ENCODE measurements at regions of chr17 and their contacts with region 1.

Region 1: GRCh38 chr17:79839363-79840268 is at the start of gene CBX4:
- DNase-seq: peak; percentile 95
- H3K4me3 Mint-ChIP-seq: peak within 1 kb of the TSS; percentile 90
- H3K27ac Mint-ChIP-seq: peak within 1 kb of the TSS; percentile 93
- H3K4me1 Mint-ChIP-seq: peaks cover 5% of the 10 kb centered on the region
- H3K27me3 Mint-ChIP-seq: peaks cover 11% of the 10 kb centered on the region
- CTCF ChIP-seq: peak; percentile 92
- total RNA-seq, gene CBX4: 85.8 and 89.7 TPM in 2 replicates

Region 2: GRCh38 chr17:79741751-79742588 is 97.6 kb before region 1 on chr17:
- CTCF ChIA-PET with region 1: interaction called, 8 read pairs
- POLR2A ChIA-PET with region 1: interaction called, 6 read pairs
- intact Hi-C with region 1: loop called (anchors 10 kb)
- DNase-seq: peak; percentile 57
- H3K4me3 Mint-ChIP-seq: no peak overlapping the region
- H3K27ac Mint-ChIP-seq: no peak overlapping the region
- H3K4me1 Mint-ChIP-seq: peaks cover 10% of the 10 kb centered on the region
- H3K27me3 Mint-ChIP-seq: peaks cover 26% of the 10 kb centered on the region
- CTCF ChIP-seq: peak; percentile 95

Region 3: GRCh38 chr17:79796763-79797491 is 42.7 kb before region 1 on chr17 and contains the start of gene CBX8:
- CTCF ChIA-PET with region 1: interaction called, 4 read pairs
- POLR2A ChIA-PET with region 1: interaction called, 24 read pairs
- intact Hi-C with region 1: no loop called
- DNase-seq: peak; percentile 99
- H3K4me3 Mint-ChIP-seq: peak within 1 kb of the TSS; percentile 81
- H3K27ac Mint-ChIP-seq: peak within 1 kb of the TSS; percentile 88
- H3K4me1 Mint-ChIP-seq: peaks cover 15% of the 10 kb centered on the region
- H3K27me3 Mint-ChIP-seq: peaks cover 26% of the 10 kb centered on the region
- CTCF ChIP-seq: no peak
- total RNA-seq, gene CBX8: 9.4 and 10.5 TPM in 2 replicates

Region 4: GRCh38 chr17:79810130-79811010 is 29.2 kb before region 1 on chr17:
- CTCF ChIA-PET with region 1: interaction called, 34 read pairs
- POLR2A ChIA-PET with region 1: interaction called, 36 read pairs
- intact Hi-C with region 1: loop called (anchors 2 kb)
- DNase-seq: peak; percentile 84
- H3K4me3 Mint-ChIP-seq: peak overlapping the region; percentile 33
- H3K27ac Mint-ChIP-seq: no peak overlapping the region
- H3K4me1 Mint-ChIP-seq: peaks cover 12% of the 10 kb centered on the region
- H3K27me3 Mint-ChIP-seq: peaks cover 46% of the 10 kb centered on the region
- CTCF ChIP-seq: no peak

Region 5: DNA sequence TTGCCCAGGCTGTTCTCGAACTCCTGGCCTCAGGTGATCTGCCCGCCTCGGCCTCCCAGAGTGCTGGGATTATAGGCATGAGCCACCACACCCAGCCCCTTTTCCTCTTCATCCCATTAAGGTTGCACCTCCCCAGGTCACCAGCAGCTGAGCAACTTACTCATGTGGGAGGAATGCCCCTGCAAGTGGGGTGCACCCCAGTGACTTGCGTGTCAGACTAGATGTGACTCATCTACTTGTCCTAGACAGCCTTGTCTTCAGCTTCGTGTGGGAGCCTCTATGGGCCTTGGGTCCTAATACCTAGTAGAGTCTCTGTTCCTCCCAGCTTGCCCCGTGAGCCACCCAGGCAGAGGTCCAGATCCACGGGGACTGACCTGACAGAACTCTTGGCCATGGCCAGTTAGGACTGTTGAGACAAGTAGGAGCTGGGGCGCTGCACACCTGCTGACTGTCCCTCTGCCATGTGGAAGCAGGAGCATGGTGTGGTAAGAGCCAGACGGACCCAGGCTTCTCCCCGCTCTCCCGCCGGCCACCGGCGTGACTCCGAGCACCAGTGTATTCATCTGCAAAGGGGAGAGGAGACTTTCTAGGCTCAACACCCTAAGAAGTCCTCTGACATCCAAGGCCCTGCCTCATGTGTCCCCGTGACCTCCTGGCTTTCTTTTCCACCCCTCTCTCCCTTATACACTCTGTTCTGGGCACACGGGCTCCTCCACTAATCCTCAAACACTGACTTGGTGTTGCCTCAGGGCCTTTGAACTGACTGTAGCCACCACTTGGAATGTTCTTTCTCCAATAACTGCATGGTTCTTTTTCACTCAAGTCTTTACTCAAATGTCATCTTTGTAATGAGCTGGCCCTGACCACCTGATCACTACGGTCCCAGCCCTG is 11.2 kb after region 1 on chr17:
- CTCF ChIA-PET with region 1: interaction called, 5 read pairs
- POLR2A ChIA-PET with region 1: interaction called, 46 read pairs
- intact Hi-C with region 1: no loop called
- DNase-seq: peak; percentile 85
- H3K4me3 Mint-ChIP-seq: peak overlapping the region; percentile 22
- H3K27ac Mint-ChIP-seq: peak overlapping the region; percentile 80
- H3K4me1 Mint-ChIP-seq: peaks cover 18% of the 10 kb centered on the region
- H3K27me3 Mint-ChIP-seq: no peaks in the 10 kb centered on the region
- CTCF ChIP-seq: no peak

Region 6: GRCh38 chr17:79915850-79916430 is 76.3 kb after region 1 on chr17:
- CTCF ChIA-PET with region 1: interaction called, 11 read pairs
- POLR2A ChIA-PET with region 1: interaction called, 18 read pairs
- intact Hi-C with region 1: loop called (anchors 1 kb)
- DNase-seq: peak; percentile 83
- H3K4me3 Mint-ChIP-seq: no peak overlapping the region
- H3K27ac Mint-ChIP-seq: no peak overlapping the region
- H3K4me1 Mint-ChIP-seq: peaks cover 19% of the 10 kb centered on the region
- H3K27me3 Mint-ChIP-seq: no peaks in the 10 kb centered on the region
- CTCF ChIP-seq: peak; percentile 63

Region 7: DNA sequence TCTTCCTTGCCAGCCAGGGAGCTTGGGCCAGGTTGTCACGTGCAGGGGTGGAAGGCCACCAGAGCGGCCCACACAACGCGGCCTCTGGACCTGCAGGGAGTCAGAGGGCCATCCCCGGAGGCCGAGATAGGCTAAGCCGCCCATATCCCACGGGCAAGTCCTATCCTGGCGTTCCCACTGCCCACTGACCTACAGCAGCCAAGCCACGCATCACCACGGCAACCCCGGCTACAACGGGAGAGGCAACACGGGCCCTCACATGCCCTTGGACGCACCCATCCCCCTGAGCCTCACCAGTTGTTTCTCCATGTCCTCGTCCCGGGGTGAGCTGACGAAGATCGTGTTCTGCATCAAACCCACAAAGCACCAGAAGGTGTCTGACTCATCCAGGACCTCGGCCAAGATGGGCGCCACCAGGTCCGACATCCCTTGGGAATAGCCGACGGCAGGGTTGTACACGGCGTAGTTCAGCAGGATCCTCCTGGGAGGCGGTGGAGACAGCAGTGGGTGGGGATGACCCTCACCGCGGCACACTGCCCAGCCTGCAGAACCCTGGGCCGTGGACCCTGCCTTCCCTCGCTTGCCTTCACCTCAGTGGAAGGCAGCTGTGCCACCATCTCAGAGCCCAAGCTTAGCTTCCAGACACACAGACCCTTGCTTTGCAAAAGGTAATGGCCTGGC is 107.9 kb after region 1 on chr17:
- CTCF ChIA-PET with region 1: no interaction called
- POLR2A ChIA-PET with region 1: interaction called, 13 read pairs
- intact Hi-C with region 1: no loop called
- DNase-seq: peak; percentile 99
- H3K4me3 Mint-ChIP-seq: peak overlapping the region; percentile 17
- H3K27ac Mint-ChIP-seq: peak overlapping the region; percentile 85
- H3K4me1 Mint-ChIP-seq: peaks cover 22% of the 10 kb centered on the region
- H3K27me3 Mint-ChIP-seq: no peaks in the 10 kb centered on the region
- CTCF ChIP-seq: no peak

Measured in MCF 10A (cell line).